GM12878 (cell line): ENCODE measurements at regions of chr13 and their contacts with region 1.

Region 1: DNA sequence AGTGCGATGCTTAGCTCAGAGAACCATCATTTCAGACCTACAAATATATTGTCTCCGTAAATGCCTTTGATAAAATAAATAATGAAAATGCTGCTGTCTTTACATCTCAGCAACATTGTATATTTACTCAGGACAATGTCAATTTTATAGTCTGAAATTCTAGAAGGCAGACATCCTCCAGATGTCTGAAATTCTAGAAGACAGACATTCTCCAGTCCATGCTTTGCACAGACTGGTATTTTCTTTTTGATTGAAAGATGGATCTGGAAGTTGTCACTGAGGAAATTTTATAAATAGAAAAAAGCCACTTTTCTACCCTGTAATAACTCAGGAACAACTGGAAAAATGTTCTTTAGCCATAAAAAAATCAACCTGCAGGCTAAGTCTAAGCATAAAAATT is 2293.3 kb downstream of the PCDH9 start:
- DNase-seq: no peak
- ATAC-seq: no peak
- H3K4me3 ChIP-seq: no peak overlapping the region
- H3K27ac ChIP-seq: no peak overlapping the region
- H3K4me1 ChIP-seq: no peaks in the 10 kb centered on the region
- H3K27me3 ChIP-seq: no peaks in the 10 kb centered on the region
- CTCF ChIP-seq: no peak
- EP300 ChIP-seq: no peak
- POLR2A ChIP-seq: no peak
- RAD21 ChIP-seq: no peak

Region 2: GRCh38 chr13:64871742-64872141 is 65.1 kb before region 1 on chr13:
- CTCF ChIA-PET with region 1: no interaction called
- POLR2A ChIA-PET with region 1: no interaction called
- RAD21 ChIA-PET with region 1: no interaction called
- SMC1A ChIA-PET with region 1: no interaction called
- in situ Hi-C with region 1: no loop called
- intact Hi-C with region 1: no loop called
- DNase-seq: no peak
- ATAC-seq: no peak
- H3K4me3 ChIP-seq: no peak overlapping the region
- H3K27ac ChIP-seq: no peak overlapping the region
- H3K4me1 ChIP-seq: no peaks in the 10 kb centered on the region
- H3K27me3 ChIP-seq: no peaks in the 10 kb centered on the region
- CTCF ChIP-seq: no peak
- EP300 ChIP-seq: no peak
- POLR2A ChIP-seq: no peak
- RAD21 ChIP-seq: no peak

Region 3: GRCh38 chr13:64993514-64994164 is 56.8 kb after region 1 on chr13:
- CTCF ChIA-PET with region 1: no interaction called
- POLR2A ChIA-PET with region 1: interaction called, 3 read pairs
- RAD21 ChIA-PET with region 1: no interaction called
- SMC1A ChIA-PET with region 1: no interaction called
- in situ Hi-C with region 1: no loop called
- intact Hi-C with region 1: loop called (anchors 5 kb)
- DNase-seq: peak; percentile 5
- ATAC-seq: peak; percentile 94
- H3K4me3 ChIP-seq: no peak overlapping the region
- H3K27ac ChIP-seq: no peak overlapping the region
- H3K4me1 ChIP-seq: no peaks in the 10 kb centered on the region
- H3K27me3 ChIP-seq: no peaks in the 10 kb centered on the region
- CTCF ChIP-seq: no peak
- EP300 ChIP-seq: peak in 1 of 2 experiments; percentile 43; a peak in 1 of 4 replicates
- POLR2A ChIP-seq: no peak
- RAD21 ChIP-seq: no peak

Region 4: GRCh38 chr13:65387743-65388347 is 451.0 kb after region 1 on chr13:
- CTCF ChIA-PET with region 1: no interaction called
- POLR2A ChIA-PET with region 1: no interaction called
- RAD21 ChIA-PET with region 1: no interaction called
- SMC1A ChIA-PET with region 1: no interaction called
- in situ Hi-C with region 1: no loop called
- intact Hi-C with region 1: no loop called
- DNase-seq: no peak
- ATAC-seq: no peak
- H3K4me3 ChIP-seq: no peak overlapping the region
- H3K27ac ChIP-seq: no peak overlapping the region
- H3K4me1 ChIP-seq: no peaks in the 10 kb centered on the region
- H3K27me3 ChIP-seq: no peaks in the 10 kb centered on the region
- CTCF ChIP-seq: no peak
- EP300 ChIP-seq: no peak
- POLR2A ChIP-seq: no peak
- RAD21 ChIP-seq: no peak